PC-3 (cell line): ENCODE measurements at regions of chr12 and their contacts with region 1.

Region 1: DNA sequence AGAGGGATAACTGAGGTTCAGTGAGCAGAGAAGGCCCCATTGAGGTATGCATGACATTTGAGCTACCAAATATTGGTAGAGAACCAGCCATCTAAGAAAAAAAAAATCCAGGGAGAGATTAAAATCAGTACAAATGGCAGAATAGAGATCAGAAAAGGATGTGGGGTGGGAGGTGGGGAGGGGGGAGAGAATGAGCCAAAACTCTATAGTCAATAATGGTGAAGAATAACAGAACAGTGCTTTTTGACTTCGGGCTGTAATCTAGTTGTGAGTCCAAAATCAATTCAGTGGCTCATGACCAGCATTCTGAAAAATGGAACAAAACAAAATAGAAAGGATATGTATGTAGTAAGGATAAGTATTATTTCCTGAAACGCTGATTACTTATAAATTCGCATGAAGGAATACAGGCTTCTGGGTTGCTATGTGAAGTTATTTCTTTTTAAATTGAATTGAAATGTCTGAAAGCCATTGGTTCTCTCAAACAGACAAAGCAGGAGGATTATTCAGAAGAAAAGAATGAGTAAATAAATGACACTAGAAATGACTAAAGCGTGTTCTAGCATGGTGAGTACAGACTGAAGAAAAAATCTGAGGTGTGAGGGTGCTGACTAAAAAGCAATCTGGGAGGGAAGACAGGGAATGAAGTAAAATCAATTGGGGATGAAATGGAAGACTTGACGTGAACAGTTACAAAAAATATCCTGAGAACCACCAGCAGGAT is 72.4 kb downstream of the ATP2B1 start:
- DNase-seq: peak; percentile 77
- ATAC-seq: peak; percentile 68
- H3K4me3 ChIP-seq: peak overlapping the region; percentile 2; the same call in 1 of the 2 replicates
- H3K27ac ChIP-seq: peak overlapping the region; percentile 72
- H3K4me1 ChIP-seq: peaks cover 49% of the 10 kb centered on the region
- H3K27me3 ChIP-seq: no peaks in the 10 kb centered on the region
- CTCF ChIP-seq: no peak

Region 2: GRCh38 chr12:89597770-89598169 is 38.4 kb before region 1 on chr12:
- CTCF ChIA-PET with region 1: no interaction called
- POLR2A ChIA-PET with region 1: interaction called, 18 read pairs
- intact Hi-C with region 1: no loop called
- DNase-seq: no peak
- ATAC-seq: no peak
- H3K4me3 ChIP-seq: no peak overlapping the region
- H3K27ac ChIP-seq: no peak overlapping the region
- H3K4me1 ChIP-seq: no peaks in the 10 kb centered on the region
- H3K27me3 ChIP-seq: no peaks in the 10 kb centered on the region
- CTCF ChIP-seq: no peak

Region 3: GRCh38 chr12:89701606-89702206 is 65.5 kb after region 1 on chr12:
- CTCF ChIA-PET with region 1: no interaction called
- POLR2A ChIA-PET with region 1: no interaction called
- intact Hi-C with region 1: loop called (anchors 2 kb)
- DNase-seq: no peak
- ATAC-seq: no peak
- H3K4me3 ChIP-seq: no peak overlapping the region
- H3K27ac ChIP-seq: no peak overlapping the region
- H3K4me1 ChIP-seq: peaks cover 69% of the 10 kb centered on the region
- H3K27me3 ChIP-seq: no peaks in the 10 kb centered on the region
- CTCF ChIP-seq: peak; percentile 29; the same call in 1 of the 2 replicates

Region 4: DNA sequence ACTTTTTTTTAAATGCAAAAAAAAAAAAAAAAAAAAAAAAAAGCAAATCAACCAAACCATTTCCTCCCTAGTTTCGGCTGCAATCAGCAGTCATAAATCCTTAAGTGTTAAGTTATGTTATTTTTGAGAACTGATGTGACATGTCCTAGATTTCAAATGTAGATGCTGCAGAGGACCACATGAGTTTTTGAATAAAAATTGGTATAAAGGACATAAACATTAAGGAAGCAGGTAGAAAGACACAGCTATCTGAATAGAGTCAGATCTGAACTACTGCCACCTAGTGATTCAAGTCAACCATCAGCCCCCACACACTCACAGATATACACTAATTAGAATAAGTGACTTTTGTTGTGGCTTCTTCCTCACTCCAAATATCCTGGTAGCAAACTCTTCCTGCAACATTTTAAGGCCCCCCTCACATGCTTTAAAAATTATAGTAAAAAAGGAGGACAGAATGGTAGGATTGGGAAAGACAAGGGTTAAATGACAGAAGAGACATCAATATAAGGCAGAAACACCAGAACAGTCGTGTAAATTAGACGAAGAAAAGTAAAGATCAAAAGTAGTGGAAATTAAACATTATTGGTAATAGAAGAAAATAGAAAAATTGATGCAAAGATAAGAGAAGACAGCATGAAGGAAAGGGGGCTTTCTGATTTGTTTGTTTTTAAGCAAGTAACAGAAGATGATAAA is 466.9 kb after region 1 on chr12:
- CTCF ChIA-PET with region 1: no interaction called
- POLR2A ChIA-PET with region 1: no interaction called
- intact Hi-C with region 1: loop called (anchors 5 kb)
- DNase-seq: peak; percentile 61
- ATAC-seq: peak; percentile 73
- H3K4me3 ChIP-seq: no peak overlapping the region
- H3K27ac ChIP-seq: no peak overlapping the region
- H3K4me1 ChIP-seq: peaks cover 44% of the 10 kb centered on the region
- H3K27me3 ChIP-seq: no peaks in the 10 kb centered on the region
- CTCF ChIP-seq: peak; percentile 83